CD4-positive, alpha-beta memory T cell (primary cell): ENCODE measurements at regions of chr10 and their contacts with region 1.

Region 1: GRCh38 chr10:124530215-124530665 is 68.6 kb downstream of the LHPP start:
- DNase-seq: peak; percentile 81 to 84 (median 82)
- H3K4me3 ChIP-seq: no peak overlapping the region
- H3K4me3 Mint-ChIP-seq: peak overlapping the region in 4 of 8 donors; percentile 6 to 75 (median 42)
- H3K27ac ChIP-seq: no peak overlapping the region
- H3K27ac Mint-ChIP-seq: peak overlapping the region in 2 of 7 donors; percentile 81 to 82
- H3K4me1 ChIP-seq: peaks cover 8% of the 10 kb centered on the region
- H3K4me1 Mint-ChIP-seq: peaks cover 3 to 5% (median 4%) of the 10 kb centered on the region in 4 donors
- H3K27me3 ChIP-seq: no peaks in the 10 kb centered on the region
- H3K27me3 Mint-ChIP-seq: no peaks in the 10 kb centered on the region

Region 2: DNA sequence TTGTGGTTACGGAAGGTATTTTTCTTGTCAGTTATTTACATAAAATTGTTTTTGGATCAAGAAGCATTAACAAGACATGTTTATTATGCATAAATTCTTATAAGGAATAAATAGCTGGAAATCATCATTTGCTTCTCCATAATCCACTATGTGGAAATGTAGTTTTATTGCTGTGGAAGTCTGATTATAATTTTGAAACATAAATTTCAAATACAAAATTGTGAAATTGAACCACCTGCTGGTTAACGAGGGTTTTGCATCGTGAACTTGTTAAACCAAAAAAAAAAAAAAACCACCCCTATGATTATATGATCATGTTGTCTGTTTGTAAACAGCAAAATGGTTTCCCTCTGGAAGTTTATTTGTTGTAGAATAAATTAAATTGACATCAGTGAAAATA is 297.2 kb after region 1 on chr10:
- CTCF ChIA-PET with region 1: interaction called, 28 read pairs
- POLR2A ChIA-PET with region 1: interaction called, 3 read pairs
- intact Hi-C with region 1: loop called (anchors 1 kb)
- DNase-seq: peak in 4 of 5 donors; percentile 4 to 14 (median 7)
- H3K4me3 ChIP-seq: no peak overlapping the region
- H3K4me3 Mint-ChIP-seq: no peak overlapping the region
- H3K27ac ChIP-seq: no peak overlapping the region
- H3K27ac Mint-ChIP-seq: no peak overlapping the region
- H3K4me1 ChIP-seq: no peaks in the 10 kb centered on the region
- H3K4me1 Mint-ChIP-seq: no peaks in the 10 kb centered on the region
- H3K27me3 ChIP-seq: no peaks in the 10 kb centered on the region
- H3K27me3 Mint-ChIP-seq: no peaks in the 10 kb centered on the region